ENCODE measurements at regions of chr4 and their contacts with region 1.

Region 1: DNA sequence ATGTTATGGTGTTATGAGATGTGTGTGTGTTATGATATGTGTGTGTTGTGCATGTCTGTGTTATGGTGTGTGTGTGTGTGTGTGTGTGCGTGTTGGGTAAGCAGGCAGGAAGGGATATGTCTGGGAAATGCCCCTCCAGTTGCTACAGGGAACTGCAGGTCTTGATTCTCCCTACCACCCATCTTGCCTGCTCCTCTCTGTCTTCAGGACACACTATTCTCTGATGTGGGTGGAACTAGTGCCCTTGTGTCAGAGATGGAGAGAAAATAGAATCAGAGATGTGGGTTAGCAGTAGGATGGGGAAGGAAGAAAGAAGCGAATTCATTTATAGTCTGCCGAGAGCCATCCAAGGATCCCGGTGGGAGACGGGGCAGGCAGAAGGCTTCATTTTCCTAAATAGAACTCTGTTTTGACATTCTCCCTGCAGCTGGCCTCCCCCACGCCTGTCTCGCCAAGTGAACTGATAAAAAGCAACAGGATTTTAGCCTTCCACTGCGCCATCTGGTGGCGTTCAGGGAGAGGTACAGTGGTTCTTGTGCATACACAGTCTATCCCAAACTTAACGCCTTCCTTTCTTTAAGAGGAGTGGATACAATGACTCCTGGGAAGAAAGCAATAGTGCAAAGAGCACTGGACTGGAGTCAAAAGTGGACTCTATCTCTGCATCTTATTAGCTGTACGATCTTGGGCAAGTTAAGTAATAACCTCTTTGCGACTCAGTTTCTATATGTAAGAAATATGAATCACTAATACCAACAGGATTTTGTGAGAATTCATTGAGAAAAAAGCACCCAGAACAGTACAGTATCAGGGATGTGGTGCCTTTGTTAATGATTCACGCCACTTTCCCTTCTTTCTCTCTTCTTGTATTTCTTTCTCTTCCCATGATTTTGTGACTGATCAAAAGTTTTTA is 14.1 kb upstream of the MGST2 start:
- DNase-seq: peak; percentile 74 to 87
- H3K4me3 ChIP-seq: peak overlapping the region in 1 of 2 donors; percentile 31
- H3K27ac ChIP-seq: no peak overlapping the region
- H3K4me1 ChIP-seq: no peaks in the 10 kb centered on the region
- H3K27me3 ChIP-seq: no peaks in the 10 kb centered on the region
- CTCF ChIP-seq: peak; percentile 92 to 93

Region 2: DNA sequence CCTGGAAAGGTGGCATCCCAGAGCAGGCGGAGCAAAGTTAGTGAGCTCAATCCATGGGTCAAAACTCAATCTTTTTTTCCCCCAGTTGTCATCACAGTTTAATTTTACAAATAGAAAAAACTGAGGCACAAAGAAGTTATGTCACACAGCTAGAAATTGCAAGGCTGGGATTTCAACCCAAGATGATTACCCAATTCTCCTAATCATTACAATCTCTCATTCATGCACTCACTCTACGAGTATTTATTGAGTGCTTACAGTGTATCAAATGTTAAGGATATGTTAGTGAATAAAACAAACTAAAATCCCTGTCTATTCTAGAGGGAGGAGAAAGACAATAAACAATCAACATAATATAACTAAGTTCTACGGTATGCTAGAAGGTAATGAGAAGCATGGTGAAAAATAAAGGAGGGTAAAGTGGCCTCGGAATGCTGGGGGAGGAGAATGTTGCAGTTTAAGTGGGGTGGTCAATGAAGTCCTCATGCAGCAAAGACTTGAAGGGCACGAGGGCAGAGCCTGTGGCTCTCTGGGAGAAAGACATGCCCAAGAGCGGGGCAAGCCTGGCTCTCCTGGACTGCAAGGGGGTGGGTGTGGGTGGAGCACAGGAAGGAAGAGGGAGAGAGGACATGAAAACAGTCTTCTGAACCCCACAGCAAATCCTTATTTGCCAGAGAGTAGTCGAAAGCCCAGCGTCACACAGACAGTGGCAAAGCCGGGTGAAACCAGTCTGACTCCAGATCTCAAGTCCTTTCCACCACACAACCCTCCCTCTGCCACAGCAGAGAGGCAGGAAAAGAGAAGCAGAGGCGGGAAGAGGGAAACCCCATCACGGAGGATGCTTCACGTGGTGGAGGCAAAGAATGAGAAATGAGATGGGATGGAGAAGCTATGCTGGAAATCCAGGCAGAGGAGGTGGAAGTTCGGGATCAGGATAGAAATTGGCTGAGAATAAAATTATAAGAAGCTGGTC is 149.3 kb before region 1 on chr4:
- intact Hi-C with region 1: loop called (anchors 5 kb)
- DNase-seq: no peak
- H3K4me3 ChIP-seq: no peak overlapping the region
- H3K27ac ChIP-seq: no peak overlapping the region
- H3K4me1 ChIP-seq: peaks cover 0 to 4% (median 0%) of the 10 kb centered on the region in 4 donors
- H3K27me3 ChIP-seq: no peaks in the 10 kb centered on the region
- CTCF ChIP-seq: no peak

Region 3: DNA sequence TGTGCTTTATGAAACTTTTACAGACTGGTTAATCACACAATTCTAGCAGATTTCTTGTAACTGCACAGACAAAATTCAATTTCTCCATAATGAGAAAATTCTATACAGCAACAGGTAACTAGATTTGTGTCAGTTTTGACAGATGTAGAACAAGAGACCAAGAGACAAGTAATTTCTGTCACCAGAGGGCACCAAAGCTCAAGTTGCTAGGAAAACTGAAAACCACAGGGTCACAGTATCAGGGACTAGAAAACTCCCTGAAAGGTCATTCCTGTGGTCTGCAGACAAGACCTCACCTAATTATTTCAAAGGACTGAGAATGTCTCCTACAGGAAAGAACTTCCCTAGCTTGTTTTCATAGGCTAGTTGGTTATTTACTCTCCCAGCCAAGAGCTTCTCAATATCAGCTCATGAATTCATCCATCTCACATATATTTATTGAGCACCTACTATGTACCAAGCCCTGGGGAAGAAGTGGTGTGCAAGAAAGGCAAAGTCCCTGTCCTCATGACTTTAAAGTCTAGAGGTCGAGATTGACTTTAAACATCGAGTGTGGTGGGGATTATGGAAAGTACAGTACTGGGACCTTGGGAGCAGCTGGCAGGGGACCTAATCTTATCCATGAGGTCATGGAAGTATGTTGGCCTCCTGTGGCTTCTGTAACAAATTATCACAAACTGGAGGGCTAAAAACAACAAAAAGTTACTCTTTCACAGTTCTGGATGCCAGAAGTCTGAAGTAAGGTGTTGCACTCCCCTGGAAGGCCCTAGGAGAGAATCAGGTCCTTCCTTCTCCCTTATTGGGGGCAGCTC is 47.8 kb before region 1 on chr4:
- intact Hi-C with region 1: loop called (anchors 2 kb)
- DNase-seq: no peak
- H3K4me3 ChIP-seq: no peak overlapping the region
- H3K27ac ChIP-seq: no peak overlapping the region
- H3K4me1 ChIP-seq: peaks cover 0 to 9% (median 8%) of the 10 kb centered on the region in 4 donors
- H3K27me3 ChIP-seq: no peaks in the 10 kb centered on the region
- CTCF ChIP-seq: peak; percentile 47 to 65

Region 4: DNA sequence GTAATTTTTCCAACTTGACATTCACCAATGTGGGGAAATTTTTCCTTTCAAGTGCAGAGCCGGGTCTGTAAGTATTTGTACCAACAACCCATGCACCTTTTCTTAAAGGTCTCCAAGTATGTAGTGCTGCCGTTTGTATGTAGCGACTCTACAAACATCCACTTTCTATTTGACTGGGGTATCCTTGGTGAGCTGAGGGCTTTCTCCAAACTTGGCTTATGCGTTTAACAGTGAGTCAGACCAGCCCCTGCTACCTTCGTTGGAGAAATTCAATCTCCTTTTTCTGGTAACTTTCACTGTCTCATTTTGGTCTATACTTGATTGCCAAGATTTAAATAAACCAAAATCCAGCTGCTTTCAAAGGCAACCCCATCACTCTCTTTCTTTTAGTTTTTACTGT is 49.0 kb after region 1 on chr4:
- intact Hi-C with region 1: no loop called
- DNase-seq: no peak
- H3K4me3 ChIP-seq: no peak overlapping the region
- H3K27ac ChIP-seq: no peak overlapping the region
- H3K4me1 ChIP-seq: no peaks in the 10 kb centered on the region
- H3K27me3 ChIP-seq: no peaks in the 10 kb centered on the region
- CTCF ChIP-seq: no peak